Ovary (tissue), 10 donors: ENCODE measurements at regions of chr16 and their contacts with region 1.

Region 1: DNA sequence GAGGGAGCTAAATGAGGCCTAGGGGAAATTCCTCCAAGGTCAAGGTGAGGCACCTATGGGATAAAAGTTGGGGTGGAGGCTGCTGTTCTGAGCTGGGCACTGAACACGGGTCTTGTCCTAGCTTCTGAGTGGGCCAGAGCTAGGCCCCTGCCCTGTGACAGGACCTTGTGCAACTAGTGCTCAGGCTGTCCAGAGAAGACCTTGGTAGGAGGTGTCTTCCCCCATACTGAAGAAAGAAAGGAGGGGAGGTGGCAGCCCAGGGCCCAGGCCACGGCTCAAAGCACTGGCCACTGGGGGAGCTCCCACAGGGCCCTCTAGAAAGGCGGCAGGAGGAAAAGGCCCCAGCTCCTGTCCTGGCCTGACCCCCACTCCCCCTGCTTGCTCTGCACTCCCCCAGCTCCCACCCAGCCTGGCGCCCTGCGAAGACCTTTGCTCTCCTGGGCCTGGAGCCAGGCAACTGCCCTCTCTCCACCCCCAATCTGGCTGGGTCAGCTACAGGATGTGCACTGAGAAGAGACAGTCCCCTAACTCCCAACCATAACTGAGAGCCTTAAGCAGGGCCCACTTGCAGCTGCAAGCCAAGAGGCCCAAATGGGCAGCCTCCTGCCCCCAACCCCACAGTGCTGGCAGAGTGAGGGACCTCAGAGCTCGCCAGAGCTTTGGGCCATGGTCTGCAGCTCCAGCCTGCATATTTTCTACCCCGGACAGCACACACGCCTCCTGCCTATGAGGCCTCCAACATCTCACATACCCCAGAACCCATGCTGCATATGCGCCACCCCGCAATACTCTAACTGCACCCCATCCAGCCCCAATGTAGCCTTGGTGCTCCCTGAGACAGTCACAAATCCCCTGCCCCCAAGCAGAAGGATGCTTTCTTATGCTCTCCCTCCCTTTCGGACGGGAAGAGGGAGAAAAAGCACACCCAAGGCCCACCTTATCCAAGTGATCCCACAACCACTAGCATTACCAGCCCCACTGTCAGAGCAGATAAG is 15.3 kb downstream of the HSD11B2 start:
- DNase-seq: peak; percentile 68 to 89 (median 84)
- H3K4me3 ChIP-seq: no peak overlapping the region
- H3K27ac ChIP-seq: peak overlapping the region; percentile 29 to 66
- H3K4me1 ChIP-seq: peaks cover 74% of the 10 kb centered on the region
- H3K27me3 ChIP-seq: no peaks in the 10 kb centered on the region
- CTCF ChIP-seq: no peak
- EP300 ChIP-seq: no peak
- POLR2A ChIP-seq: no peak

Region 2: GRCh38 chr16:67459066-67459860 is 13.1 kb after region 1 on chr16:
- intact Hi-C with region 1: loop called in 1 of 4 experiments (anchors 2 kb)
- DNase-seq: peak in 1 of 5 donors; percentile 54
- H3K4me3 ChIP-seq: no peak overlapping the region
- H3K27ac ChIP-seq: peak overlapping the region; percentile 31 to 76
- H3K4me1 ChIP-seq: peaks cover 45% of the 10 kb centered on the region
- H3K27me3 ChIP-seq: no peaks in the 10 kb centered on the region
- CTCF ChIP-seq: no peak
- EP300 ChIP-seq: no peak
- POLR2A ChIP-seq: no peak